ENCODE measurements at regions of chr21 and their contacts with region 1.

Region 1: GRCh38 chr21:29372063-29372802 is 73.5 kb downstream of the BACH1 start:
- DNase-seq: peak; percentile 74
- H3K4me3 ChIP-seq: no peak overlapping the region
- H3K27ac ChIP-seq: no peak overlapping the region
- H3K4me1 ChIP-seq: peaks cover 0 to 18% (median 0%) of the 10 kb centered on the region in 6 donors
- H3K27me3 ChIP-seq: no peaks in the 10 kb centered on the region
- CTCF ChIP-seq: peak; percentile 52 to 88 (median 74)
- POLR2A ChIP-seq: no peak

Region 2: GRCh38 chr21:29091032-29091431 is 281.2 kb before region 1 on chr21:
- intact Hi-C with region 1: loop called (anchors 5 kb)
- DNase-seq: no peak
- H3K4me3 ChIP-seq: no peak overlapping the region
- H3K27ac ChIP-seq: peak overlapping the region in 1 of 8 donors; percentile 53
- H3K4me1 ChIP-seq: peaks cover 0 to 22% (median 0%) of the 10 kb centered on the region in 6 donors
- H3K27me3 ChIP-seq: no peaks in the 10 kb centered on the region
- CTCF ChIP-seq: no peak
- POLR2A ChIP-seq: no peak

Region 3: DNA sequence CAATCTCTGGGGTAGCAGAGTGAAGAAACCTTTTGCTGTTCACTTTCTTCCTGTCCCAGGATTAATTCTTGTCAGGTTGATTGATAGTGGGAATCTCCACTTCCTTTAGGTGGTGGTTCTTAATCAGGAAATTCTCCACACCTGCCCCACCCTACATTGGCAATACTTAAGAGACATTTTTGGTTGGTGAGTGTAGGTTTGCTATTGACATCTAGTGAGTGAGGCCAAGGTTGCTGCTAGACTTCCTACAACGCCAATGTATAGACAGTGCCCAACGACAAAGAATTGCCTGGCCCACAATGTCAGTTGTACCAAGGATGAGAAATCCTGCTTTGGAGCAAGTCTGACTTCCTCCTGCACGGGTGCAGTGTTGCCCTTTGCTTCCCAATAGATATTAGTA is 203.3 kb before region 1 on chr21:
- intact Hi-C with region 1: loop called (anchors 5 kb)
- DNase-seq: no peak
- H3K4me3 ChIP-seq: no peak overlapping the region
- H3K27ac ChIP-seq: no peak overlapping the region
- H3K4me1 ChIP-seq: peaks cover 0 to 47% (median 20%) of the 10 kb centered on the region in 6 donors
- H3K27me3 ChIP-seq: no peaks in the 10 kb centered on the region
- CTCF ChIP-seq: no peak
- POLR2A ChIP-seq: no peak

Measured in spleen (tissue), 13 donors.